Activated naive CD4-positive, alpha-beta T cell treated with anti-CD3 and anti-CD28 coated beads for 36 hours (primary cell): ENCODE measurements at regions of chr3 and their contacts with region 1.

Region 1: DNA sequence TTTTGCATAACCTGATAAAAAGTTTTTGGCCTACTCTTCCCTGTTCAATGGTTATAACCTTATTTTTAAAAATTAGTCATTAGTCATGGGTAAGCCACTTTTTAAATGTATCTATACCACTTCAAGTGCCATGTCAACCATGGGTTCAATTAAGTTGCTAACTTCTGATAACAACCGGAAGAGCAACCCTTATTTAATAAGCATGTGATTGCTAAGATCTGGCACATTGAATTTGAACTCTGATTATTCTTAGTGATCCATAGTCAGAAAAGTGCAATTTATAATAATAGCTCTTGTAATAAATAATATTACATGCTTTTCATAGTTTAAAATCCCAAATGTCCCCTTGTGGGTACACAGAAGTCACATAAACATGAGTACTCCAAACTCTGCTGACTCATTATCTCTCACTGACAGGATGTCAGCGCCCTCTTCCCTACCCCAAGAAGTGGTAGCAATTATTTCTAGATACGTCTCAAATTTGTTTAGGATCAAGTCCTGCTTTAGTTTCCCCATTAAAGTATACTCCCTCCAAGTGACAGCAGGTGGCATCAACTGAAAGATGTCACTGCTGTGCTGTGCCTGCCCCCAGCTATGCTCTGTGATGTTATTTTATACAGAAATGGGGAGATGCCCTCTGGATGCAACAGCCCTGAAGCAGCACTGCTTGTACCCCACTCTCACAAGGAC is 18.6 kb downstream of the SAMD7 start:
- DNase-seq: peak; percentile 50
- H3K4me3 Mint-ChIP-seq: no peak overlapping the region
- H3K27ac Mint-ChIP-seq: no peak overlapping the region
- H3K4me1 Mint-ChIP-seq: peaks cover 4% of the 10 kb centered on the region
- H3K27me3 Mint-ChIP-seq: no peaks in the 10 kb centered on the region

Region 2: DNA sequence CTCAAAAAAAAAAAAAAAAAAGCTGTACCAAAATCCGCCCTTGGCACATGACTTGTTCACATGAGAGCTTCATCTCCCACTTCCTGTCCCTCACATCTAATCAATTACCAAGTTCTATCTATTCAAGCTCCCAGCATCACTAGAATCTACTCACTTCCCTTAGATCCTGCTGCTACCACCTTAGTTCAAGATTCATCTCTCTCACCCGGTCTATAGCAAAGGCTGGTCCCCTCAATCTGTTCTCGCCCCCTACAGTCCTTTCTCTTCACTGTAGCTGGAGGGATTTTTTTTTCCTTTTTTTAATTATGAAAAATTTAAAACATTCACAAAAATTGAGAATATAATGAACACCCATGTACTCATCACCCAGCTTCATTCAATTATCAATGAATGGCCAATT is 91.1 kb after region 1 on chr3:
- CTCF ChIA-PET with region 1: interaction called, 3 read pairs
- intact Hi-C with region 1: loop called (anchors 1 kb)
- DNase-seq: no peak
- H3K4me3 Mint-ChIP-seq: no peak overlapping the region
- H3K27ac Mint-ChIP-seq: no peak overlapping the region
- H3K4me1 Mint-ChIP-seq: peaks cover 21% of the 10 kb centered on the region
- H3K27me3 Mint-ChIP-seq: no peaks in the 10 kb centered on the region